OCI-LY7 (cell line): ENCODE measurements at regions of chr17 and their contacts with region 1.

Region 1: GRCh38 chr17:74770498-74771318 is 5.4 kb downstream of the NAT9 start:
- DNase-seq: peak; percentile 66
- H3K4me3 ChIP-seq: no peak overlapping the region
- H3K27ac ChIP-seq: no peak overlapping the region
- H3K4me1 ChIP-seq: peaks cover 6% of the 10 kb centered on the region
- CTCF ChIP-seq: peak; percentile 86

Region 2: DNA sequence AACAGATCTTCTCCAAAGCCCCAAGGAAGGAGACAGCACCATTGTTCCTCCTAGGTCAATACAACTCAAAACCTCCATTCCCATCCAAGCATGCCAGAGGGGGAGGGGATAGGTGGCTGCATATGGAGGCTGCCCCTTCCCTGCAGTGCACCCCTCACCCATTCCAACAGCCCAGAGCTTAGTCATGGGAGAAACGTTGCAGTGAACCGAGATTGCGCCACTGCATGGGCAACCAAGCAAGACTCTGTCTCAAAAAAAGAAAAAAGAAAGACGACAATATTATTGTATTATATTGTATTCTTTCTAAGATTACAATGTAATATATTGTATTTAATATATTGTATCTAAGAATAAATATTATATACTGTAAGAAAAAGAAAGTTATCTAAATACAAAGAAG is 110.8 kb before region 1 on chr17:
- CTCF ChIA-PET with region 1: interaction called, 3 read pairs
- POLR2A ChIA-PET with region 1: interaction called, 3 read pairs
- intact Hi-C with region 1: loop called (anchors 1 kb)
- DNase-seq: no peak
- H3K4me3 ChIP-seq: no peak overlapping the region
- H3K27ac ChIP-seq: no peak overlapping the region
- H3K4me1 ChIP-seq: no peaks in the 10 kb centered on the region
- CTCF ChIP-seq: no peak